ENCODE measurements at regions of chr6 and their contacts with region 1.

Region 1: DNA sequence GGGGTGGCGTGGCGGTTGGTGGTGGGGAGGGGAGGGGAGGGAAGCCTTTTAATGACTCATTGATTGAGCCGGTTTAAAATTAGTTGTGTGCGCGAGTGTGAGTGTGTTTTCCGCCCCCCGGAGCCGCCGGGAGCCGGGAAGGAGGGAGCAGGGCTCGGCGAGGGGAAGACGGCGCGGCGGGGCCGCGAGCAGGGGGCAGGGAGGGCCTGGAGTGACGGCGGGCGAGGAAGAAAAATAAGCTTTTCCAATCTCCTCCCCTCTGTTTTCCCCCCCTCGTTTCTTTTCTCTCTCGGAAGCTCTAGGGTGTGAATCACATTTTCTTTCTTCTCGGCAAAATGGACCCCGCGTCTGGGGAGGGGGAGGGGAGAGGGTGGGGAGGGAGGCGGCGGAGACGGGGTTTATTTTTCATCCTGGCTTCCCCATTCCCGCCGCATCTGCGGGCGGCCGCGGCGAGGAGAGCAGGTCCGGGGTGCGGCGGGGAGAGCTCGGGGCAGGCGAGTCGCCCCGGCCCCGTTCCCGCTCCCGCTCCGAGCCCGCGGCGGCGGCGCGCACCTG is 847 bp downstream of the BICRAL start:
- DNase-seq: peak; percentile 86
- H3K4me3 Mint-ChIP-seq: peak overlapping the region; percentile 73
- H3K27ac Mint-ChIP-seq: peak overlapping the region; percentile 95
- H3K4me1 Mint-ChIP-seq: peaks cover 8% of the 10 kb centered on the region
- H3K27me3 Mint-ChIP-seq: no peaks in the 10 kb centered on the region
- CTCF ChIP-seq: no peak

Region 2: DNA sequence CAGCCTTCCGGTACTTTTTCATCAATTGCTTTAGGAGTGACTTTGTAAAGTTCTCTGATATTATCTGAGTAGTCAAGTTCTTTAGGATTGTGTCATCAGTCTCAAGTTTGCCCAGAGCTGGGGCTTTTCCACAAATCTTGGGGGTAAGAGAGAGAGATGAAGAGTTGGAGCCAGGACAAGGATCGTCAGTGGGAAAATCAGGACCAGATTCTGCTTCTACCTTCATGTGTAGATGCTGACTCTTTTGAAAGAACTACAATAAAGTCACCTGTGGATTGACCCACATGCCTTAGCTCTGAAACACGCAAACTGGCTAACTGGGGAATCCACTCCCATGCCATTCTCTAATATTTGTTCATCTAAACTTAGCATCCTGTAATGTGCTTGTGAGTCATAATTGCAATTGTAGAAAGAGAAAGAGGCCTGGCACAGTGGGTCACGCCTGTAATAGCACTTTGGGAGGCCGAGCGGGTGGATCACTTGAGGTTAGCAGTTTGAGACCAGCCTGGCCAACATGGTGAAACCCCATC is 16.5 kb before region 1 on chr6:
- CTCF ChIA-PET with region 1: interaction called, 4 read pairs
- POLR2A ChIA-PET with region 1: interaction called, 21 read pairs
- intact Hi-C with region 1: no loop called
- DNase-seq: peak; percentile 61
- H3K4me3 Mint-ChIP-seq: no peak overlapping the region
- H3K27ac Mint-ChIP-seq: peak overlapping the region; percentile 79
- H3K4me1 Mint-ChIP-seq: peaks cover 11% of the 10 kb centered on the region
- H3K27me3 Mint-ChIP-seq: no peaks in the 10 kb centered on the region
- CTCF ChIP-seq: no peak

Region 3: GRCh38 chr6:42796171-42796570 is 13.5 kb after region 1 on chr6:
- CTCF ChIA-PET with region 1: no interaction called
- POLR2A ChIA-PET with region 1: interaction called, 12 read pairs
- intact Hi-C with region 1: no loop called
- DNase-seq: no peak
- H3K4me3 Mint-ChIP-seq: no peak overlapping the region
- H3K27ac Mint-ChIP-seq: no peak overlapping the region
- H3K4me1 Mint-ChIP-seq: peaks cover 19% of the 10 kb centered on the region
- H3K27me3 Mint-ChIP-seq: no peaks in the 10 kb centered on the region
- CTCF ChIP-seq: no peak

Region 4: GRCh38 chr6:42890311-42891198 is 107.9 kb after region 1 on chr6:
- CTCF ChIA-PET with region 1: no interaction called
- POLR2A ChIA-PET with region 1: interaction called, 16 read pairs
- intact Hi-C with region 1: no loop called
- DNase-seq: peak; percentile 98
- H3K4me3 Mint-ChIP-seq: peak overlapping the region; percentile 89
- H3K27ac Mint-ChIP-seq: peak overlapping the region; percentile 80
- H3K4me1 Mint-ChIP-seq: no peaks in the 10 kb centered on the region
- H3K27me3 Mint-ChIP-seq: no peaks in the 10 kb centered on the region
- CTCF ChIP-seq: no peak

Measured in MCF 10A (cell line).